ENCODE measurements at regions of chr3 and their contacts with region 1.

Region 1: GRCh38 chr3:111967651-111968274 is 11.1 kb upstream of the ABHD10 start:
- DNase-seq: peak; percentile 94
- ATAC-seq: peak; percentile 96
- H3K4me3 Mint-ChIP-seq: no peak overlapping the region
- H3K27ac Mint-ChIP-seq: peak overlapping the region; percentile 57
- H3K4me1 Mint-ChIP-seq: peaks cover 20% of the 10 kb centered on the region
- H3K27me3 Mint-ChIP-seq: no peaks in the 10 kb centered on the region
- CTCF ChIP-seq: peak; percentile 87

Region 2: GRCh38 chr3:111708157-111708771 is 259.5 kb before region 1 on chr3:
- CTCF ChIA-PET with region 1: interaction called, 318 read pairs
- POLR2A ChIA-PET with region 1: no interaction called
- intact Hi-C with region 1: no loop called
- DNase-seq: no peak
- ATAC-seq: no peak
- H3K4me3 Mint-ChIP-seq: no peak overlapping the region
- H3K27ac Mint-ChIP-seq: no peak overlapping the region
- H3K4me1 Mint-ChIP-seq: peaks cover 35% of the 10 kb centered on the region
- H3K27me3 Mint-ChIP-seq: no peaks in the 10 kb centered on the region
- CTCF ChIP-seq: no peak

Region 3: GRCh38 chr3:111895079-111895478 is 72.7 kb before region 1 on chr3:
- CTCF ChIA-PET with region 1: interaction called, 14 read pairs
- POLR2A ChIA-PET with region 1: interaction called, 4 read pairs
- intact Hi-C with region 1: no loop called
- DNase-seq: no peak
- ATAC-seq: peak; percentile 51
- H3K4me3 Mint-ChIP-seq: no peak overlapping the region
- H3K27ac Mint-ChIP-seq: no peak overlapping the region
- H3K4me1 Mint-ChIP-seq: peaks cover 2% of the 10 kb centered on the region
- H3K27me3 Mint-ChIP-seq: no peaks in the 10 kb centered on the region
- CTCF ChIP-seq: no peak

Region 4: GRCh38 chr3:111978493-111979433 is 11.0 kb after region 1 on chr3 and contains the start of gene ABHD10:
- CTCF ChIA-PET with region 1: interaction called, 44 read pairs
- POLR2A ChIA-PET with region 1: interaction called, 4 read pairs
- intact Hi-C with region 1: no loop called
- DNase-seq: peak; percentile 98
- ATAC-seq: peak; percentile 94
- H3K4me3 Mint-ChIP-seq: peak within 1 kb of the TSS; percentile 92
- H3K27ac Mint-ChIP-seq: peak within 1 kb of the TSS; percentile 92
- H3K4me1 Mint-ChIP-seq: peaks cover 37% of the 10 kb centered on the region
- H3K27me3 Mint-ChIP-seq: no peaks in the 10 kb centered on the region
- CTCF ChIP-seq: no peak
- total RNA-seq, gene ABHD10: 59.4 to 66.5 TPM

Region 5: DNA sequence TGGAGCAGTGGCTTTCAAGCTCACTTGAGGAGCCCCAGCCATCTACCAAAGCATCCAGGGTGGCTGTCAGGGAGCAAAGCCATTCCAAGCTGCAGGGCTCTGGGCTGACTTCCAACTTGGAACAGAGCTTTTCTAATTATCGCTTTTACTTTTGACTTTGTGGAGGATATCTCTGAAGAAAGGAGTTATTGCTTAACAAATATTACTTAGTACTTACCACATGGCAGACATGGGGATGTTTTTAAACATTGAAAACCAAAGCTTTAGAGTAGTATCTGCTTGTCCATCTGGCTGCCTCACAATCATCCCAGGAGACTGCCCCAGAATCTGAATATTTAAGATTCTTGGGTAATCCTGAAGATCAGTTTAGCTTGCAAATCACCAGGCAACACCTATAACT is 39.9 kb after region 1 on chr3:
- CTCF ChIA-PET with region 1: interaction called, 98 read pairs
- POLR2A ChIA-PET with region 1: interaction called, 3 read pairs
- intact Hi-C with region 1: no loop called
- DNase-seq: no peak
- ATAC-seq: no peak
- H3K4me3 Mint-ChIP-seq: no peak overlapping the region
- H3K27ac Mint-ChIP-seq: no peak overlapping the region
- H3K4me1 Mint-ChIP-seq: peaks cover 30% of the 10 kb centered on the region
- H3K27me3 Mint-ChIP-seq: no peaks in the 10 kb centered on the region
- CTCF ChIP-seq: no peak

Region 6: DNA sequence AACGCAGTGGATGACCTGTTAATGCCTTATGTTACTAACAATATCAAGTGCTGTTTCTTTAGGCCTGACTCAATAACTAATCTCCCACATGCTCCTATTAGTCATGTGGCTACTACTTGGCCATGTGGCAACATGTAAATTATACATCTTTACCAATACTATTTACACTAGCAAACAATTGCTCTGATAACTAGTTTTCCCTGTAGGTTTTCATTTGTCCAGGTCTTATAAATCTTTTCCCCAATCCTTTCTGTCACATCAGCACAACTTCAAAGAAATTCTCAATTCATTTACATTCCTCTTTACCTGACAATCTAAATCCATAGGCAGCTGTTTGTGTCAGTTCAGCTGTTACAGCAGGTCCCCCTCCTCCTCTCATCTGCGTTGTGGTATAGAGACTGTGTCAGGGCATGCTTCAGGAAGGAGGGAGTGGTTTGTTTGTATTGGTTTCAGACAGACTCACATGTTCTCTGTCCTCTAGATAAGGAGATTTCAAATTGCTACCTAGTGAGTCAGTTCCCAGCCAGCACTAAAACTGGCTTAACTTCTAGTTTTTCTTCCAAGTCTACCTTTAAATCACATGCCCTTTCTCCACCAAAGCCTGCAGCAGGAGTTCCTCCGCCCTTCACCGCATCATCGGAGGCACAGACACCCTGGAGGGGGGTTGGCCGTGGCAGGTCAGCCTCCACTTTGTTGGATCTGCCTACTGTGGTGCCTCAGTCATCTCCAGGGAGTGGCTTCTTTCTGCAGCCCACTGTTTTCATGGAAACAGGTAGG is 107.1 kb after region 1 on chr3:
- CTCF ChIA-PET with region 1: no interaction called
- POLR2A ChIA-PET with region 1: no interaction called
- intact Hi-C with region 1: no loop called
- DNase-seq: peak; percentile 49
- ATAC-seq: peak; percentile 94
- H3K4me3 Mint-ChIP-seq: no peak overlapping the region
- H3K27ac Mint-ChIP-seq: peak overlapping the region; percentile 28
- H3K4me1 Mint-ChIP-seq: peaks cover 31% of the 10 kb centered on the region
- H3K27me3 Mint-ChIP-seq: no peaks in the 10 kb centered on the region
- CTCF ChIP-seq: no peak